Tibial artery (tissue), 4 donors: ENCODE measurements at regions of chr1 and their contacts with region 1.

Region 1: DNA sequence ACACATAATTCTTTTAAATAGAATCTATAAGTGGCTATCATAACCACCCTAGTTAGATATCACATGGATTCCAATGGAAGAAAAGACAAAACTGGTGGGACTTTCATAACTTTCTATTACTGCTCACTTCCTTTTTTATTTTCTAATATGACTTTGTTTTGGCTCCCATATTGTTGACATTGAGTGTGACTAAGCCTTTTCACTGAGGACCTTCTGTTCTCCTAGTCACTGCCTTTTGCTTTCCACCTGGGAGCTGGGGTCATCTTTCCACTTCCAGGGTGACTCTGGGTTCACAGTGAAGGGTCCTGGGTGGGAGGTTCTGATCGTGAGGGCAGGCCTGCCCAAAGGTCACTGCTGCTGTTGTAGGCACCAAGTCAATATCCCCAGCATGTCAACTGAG is 275.8 kb downstream of the TGFB2 start:
- DNase-seq: no peak
- H3K4me3 ChIP-seq: no peak overlapping the region
- H3K27ac ChIP-seq: peak overlapping the region; percentile 65 to 66
- H3K4me1 ChIP-seq: peaks cover 0 to 17% (median 6%) of the 10 kb centered on the region in 4 donors
- H3K27me3 ChIP-seq: no peaks in the 10 kb centered on the region
- CTCF ChIP-seq: no peak

Region 2: GRCh38 chr1:218660678-218661053 is 39.7 kb after region 1 on chr1:
- intact Hi-C with region 1: loop called (anchors 5 kb)
- DNase-seq: no peak
- H3K4me3 ChIP-seq: no peak overlapping the region
- H3K27ac ChIP-seq: peak overlapping the region; percentile 52 to 61
- H3K4me1 ChIP-seq: peaks cover 0 to 61% (median 16%) of the 10 kb centered on the region in 4 donors
- H3K27me3 ChIP-seq: no peaks in the 10 kb centered on the region
- CTCF ChIP-seq: no peak

Region 3: GRCh38 chr1:218702775-218703174 is 81.8 kb after region 1 on chr1:
- intact Hi-C with region 1: no loop called
- DNase-seq: no peak
- H3K4me3 ChIP-seq: no peak overlapping the region
- H3K27ac ChIP-seq: no peak overlapping the region
- H3K4me1 ChIP-seq: peaks cover 0 to 31% (median 15%) of the 10 kb centered on the region in 4 donors
- H3K27me3 ChIP-seq: no peaks in the 10 kb centered on the region
- CTCF ChIP-seq: no peak